AG04450 (cell line): ENCODE measurements at regions of chr1 and their contacts with region 1.

Region 1: GRCh38 chr1:154335025-154335714 is 9.8 kb downstream of the ATP8B2 start:
- DNase-seq: no peak
- H3K4me3 ChIP-seq: no peak overlapping the region
- H3K27ac ChIP-seq: peak overlapping the region; percentile 90
- H3K27me3 ChIP-seq: no peaks in the 10 kb centered on the region
- CTCF ChIP-seq: peak; percentile 88

Region 2: GRCh38 chr1:154115180-154115579 is 220.0 kb before region 1 on chr1:
- CTCF ChIA-PET with region 1: no interaction called
- POLR2A ChIA-PET with region 1: no interaction called
- DNase-seq: no peak
- H3K4me3 ChIP-seq: no peak overlapping the region
- H3K27ac ChIP-seq: no peak overlapping the region
- H3K27me3 ChIP-seq: no peaks in the 10 kb centered on the region
- CTCF ChIP-seq: no peak

Region 3: DNA sequence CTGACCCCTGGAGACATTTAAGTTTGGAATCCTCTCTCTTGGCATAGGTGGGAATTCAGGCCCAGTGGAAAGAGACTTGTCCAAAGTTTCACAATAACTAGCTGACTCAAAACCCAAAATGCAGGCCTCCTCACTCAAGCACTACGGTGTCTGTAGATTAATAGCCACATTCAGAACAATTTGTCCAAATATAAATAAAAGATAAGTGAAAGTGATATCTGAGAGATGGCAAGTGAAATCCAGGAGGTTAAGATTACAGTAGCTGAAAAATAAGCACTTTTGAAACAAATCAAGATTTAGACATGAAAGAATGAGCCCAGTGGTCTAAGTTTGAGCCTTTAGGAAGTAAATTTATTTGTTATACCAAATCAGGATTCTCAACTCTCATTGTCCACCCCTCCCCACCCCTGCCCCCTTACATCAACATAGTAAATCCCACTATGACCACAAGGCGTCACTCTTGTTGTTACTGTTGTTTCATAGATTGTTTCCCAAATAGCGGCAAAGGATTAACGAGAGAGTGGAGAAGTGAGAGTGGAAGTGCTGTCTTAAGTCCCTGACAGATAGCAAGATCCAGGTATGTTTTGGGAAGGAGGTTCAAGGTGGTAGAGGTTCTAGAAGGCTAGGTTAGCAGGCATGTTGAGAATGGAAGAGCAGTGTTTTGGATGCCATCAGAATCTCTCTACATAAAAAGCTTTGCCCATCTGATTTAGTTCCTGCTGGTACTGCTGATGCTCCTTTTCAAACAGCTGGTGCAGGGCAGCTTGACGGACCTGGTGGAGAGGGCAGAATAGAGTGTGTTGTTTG is 136.2 kb before region 1 on chr1:
- CTCF ChIA-PET with region 1: interaction called, 25 read pairs
- POLR2A ChIA-PET with region 1: no interaction called
- DNase-seq: no peak
- H3K4me3 ChIP-seq: no peak overlapping the region; the same call in 1 of the 2 replicates
- H3K27ac ChIP-seq: no peak overlapping the region
- H3K27me3 ChIP-seq: peaks cover 5% of the 10 kb centered on the region
- CTCF ChIP-seq: peak; percentile 65

Region 4: DNA sequence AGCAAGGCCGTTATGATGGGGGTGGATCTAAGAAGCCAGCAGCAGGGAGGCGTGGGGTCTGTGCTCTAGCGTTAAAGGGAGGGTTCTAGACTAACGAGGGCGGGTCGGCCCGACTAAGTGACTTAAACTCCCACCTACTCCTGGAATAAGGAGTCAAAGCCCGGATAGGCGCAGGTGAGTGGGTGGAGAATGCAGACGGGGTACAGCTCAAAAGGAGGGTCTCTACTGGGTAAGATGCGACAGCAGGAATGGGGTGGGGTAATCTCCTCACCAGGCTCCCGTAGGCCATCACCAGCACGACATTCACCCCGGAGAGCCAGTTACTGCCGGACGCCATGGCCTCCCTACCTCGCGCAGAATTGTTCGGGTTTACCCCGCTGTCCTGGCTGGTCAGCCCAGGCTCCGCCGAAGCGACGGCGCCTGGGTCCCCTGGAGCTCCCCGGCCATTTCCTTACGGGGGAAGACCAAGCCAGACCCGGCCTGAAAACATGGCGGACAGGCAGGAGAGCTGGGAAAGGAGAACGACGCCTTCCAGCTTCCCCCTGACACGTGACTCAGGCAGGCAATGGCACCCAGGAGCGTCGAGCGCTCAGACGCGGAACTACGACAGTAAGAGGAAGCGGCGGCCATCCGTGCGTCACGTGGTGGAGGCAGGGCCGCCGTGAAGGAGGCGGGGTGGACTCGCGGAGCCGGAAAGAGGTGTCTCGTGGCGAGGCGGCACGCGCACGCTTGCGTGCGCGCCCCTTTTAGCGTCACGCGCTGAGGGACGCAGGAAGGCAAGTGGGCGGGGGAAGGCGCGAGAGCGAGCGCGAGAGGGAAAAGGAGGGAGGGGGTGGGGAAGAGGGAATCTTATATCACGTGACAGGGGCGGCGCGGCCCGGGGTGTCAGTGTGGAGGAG is 114.8 kb before region 1 on chr1 and contains the start of gene UBAP2L:
- CTCF ChIA-PET with region 1: interaction called, 11 read pairs
- POLR2A ChIA-PET with region 1: interaction called, 3 read pairs
- DNase-seq: peak; percentile 98
- H3K4me3 ChIP-seq: peak within 1 kb of the TSS; percentile 95
- H3K27ac ChIP-seq: peak within 1 kb of the TSS; percentile 99
- H3K27me3 ChIP-seq: no peaks in the 10 kb centered on the region
- CTCF ChIP-seq: no peak
- polyA plus RNA-seq, gene UBAP2L: 173 and 177 TPM in 2 replicates

Region 5: DNA sequence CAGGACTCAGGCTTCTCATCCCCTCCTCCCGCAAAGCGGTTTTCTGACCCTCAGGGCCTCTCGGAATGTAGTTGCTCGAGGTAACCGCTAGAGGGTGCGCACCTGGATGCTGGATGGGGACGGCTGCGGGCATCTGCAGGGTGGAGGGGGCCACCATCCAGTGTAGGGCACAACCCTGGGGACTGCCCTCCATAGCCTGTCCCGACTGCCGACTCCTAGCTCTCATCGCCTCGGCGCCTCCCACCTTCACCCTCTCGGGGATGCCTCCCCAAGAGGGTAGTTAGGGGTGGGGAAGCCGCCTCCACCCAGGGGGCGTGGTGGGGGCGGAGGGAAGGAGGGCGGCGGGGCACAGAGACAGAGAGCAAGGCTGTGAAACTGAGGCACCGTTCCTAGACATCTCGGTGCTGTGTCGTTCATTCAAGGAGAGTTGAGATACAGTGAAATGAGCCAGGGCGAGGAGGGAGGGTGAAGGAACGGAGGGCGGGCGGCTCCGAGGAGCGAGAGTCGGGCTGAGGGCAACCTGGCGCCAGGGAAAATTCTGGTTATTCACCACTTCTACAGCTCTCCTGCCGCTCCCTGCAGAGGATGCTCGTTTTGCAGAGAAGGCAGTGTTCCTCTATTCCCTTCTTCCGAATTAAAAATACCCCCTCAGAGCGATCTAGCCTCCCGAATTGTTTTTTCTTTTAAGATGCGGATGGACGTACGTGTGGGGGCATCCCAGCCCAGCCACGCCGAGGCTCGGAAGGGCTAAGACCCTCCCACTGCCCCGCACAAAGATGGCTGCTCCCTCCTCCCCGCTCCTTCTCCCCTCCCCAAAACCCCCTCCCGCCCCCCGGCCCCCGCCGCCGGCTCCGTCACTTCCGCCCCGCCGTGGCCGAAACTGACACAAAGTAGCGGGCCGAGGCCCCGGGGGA is 10.2 kb before region 1 on chr1 and contains the start of gene ATP8B2:
- CTCF ChIA-PET with region 1: interaction called, 127 read pairs
- POLR2A ChIA-PET with region 1: interaction called, 9 read pairs
- DNase-seq: no peak
- H3K4me3 ChIP-seq: peak within 1 kb of the TSS; percentile 89
- H3K27ac ChIP-seq: peak within 1 kb of the TSS; percentile 99
- H3K27me3 ChIP-seq: peaks cover 22% of the 10 kb centered on the region
- CTCF ChIP-seq: peak; percentile 95
- polyA plus RNA-seq, gene ATP8B2: 42.5 and 45.7 TPM in 2 replicates

Region 6: DNA sequence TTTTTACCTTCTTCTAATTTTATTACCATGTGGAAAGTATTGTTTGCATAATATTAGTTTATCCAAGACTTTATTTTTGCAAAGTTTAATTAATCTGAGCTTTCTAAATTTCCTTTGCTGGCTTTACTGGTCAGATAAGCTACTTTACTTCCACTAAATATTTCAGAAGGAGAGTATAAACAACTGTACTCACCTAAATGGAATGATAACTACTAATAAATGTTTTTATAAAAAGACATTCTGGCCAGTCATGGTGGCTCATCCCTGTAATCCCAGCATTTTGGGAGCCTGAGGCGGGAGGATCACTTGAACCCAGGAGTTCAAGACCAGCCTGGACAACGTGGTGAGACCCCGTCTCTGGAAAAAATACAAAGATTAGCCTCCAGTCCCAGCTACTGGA is 26.2 kb after region 1 on chr1:
- CTCF ChIA-PET with region 1: interaction called, 12 read pairs
- POLR2A ChIA-PET with region 1: no interaction called
- DNase-seq: no peak
- H3K4me3 ChIP-seq: no peak overlapping the region
- H3K27ac ChIP-seq: peak overlapping the region; percentile 24
- H3K27me3 ChIP-seq: peaks cover 6% of the 10 kb centered on the region
- CTCF ChIP-seq: no peak

Region 7: GRCh38 chr1:154404984-154405761 is 70.0 kb after region 1 on chr1 and contains the start of gene IL6R:
- CTCF ChIA-PET with region 1: interaction called, 13 read pairs
- POLR2A ChIA-PET with region 1: no interaction called
- DNase-seq: peak; percentile 70
- H3K4me3 ChIP-seq: peak within 1 kb of the TSS; percentile 76
- H3K27ac ChIP-seq: peak within 1 kb of the TSS; percentile 61
- H3K27me3 ChIP-seq: peaks cover 24% of the 10 kb centered on the region
- CTCF ChIP-seq: no peak
- polyA plus RNA-seq, gene IL6R: 5.9 and 6.1 TPM in 2 replicates